ENCODE measurements at regions of chr19 and their contacts with region 1.

Region 1: DNA sequence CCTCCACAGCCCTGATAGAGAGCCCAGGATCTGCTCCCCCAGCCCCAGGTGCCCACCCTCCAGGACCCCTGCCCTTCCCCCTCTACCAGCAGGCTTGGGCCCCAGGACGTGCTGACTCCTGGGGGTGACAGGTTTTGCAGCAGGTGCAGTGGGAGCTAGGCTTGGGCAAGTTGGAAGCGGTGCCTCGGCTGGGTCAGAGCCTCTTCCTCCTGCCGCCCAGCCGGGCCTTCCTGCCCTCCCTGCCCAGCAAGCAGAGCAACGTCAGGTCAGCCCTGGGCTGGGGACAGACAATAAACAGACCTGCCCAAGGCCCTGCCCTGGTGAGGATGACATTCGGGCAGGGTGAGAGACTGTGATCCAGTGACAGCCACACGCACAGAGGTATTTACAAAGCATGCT is 9.2 kb upstream of the NCCRP1 start:
- DNase-seq: no peak
- H3K4me3 ChIP-seq: no peak overlapping the region
- H3K27ac ChIP-seq: no peak overlapping the region
- H3K4me1 ChIP-seq: no peaks in the 10 kb centered on the region
- H3K27me3 ChIP-seq: no peaks in the 10 kb centered on the region
- CTCF ChIP-seq: no peak

Region 2: GRCh38 chr19:39110263-39110967 is 77.1 kb before region 1 on chr19:
- CTCF ChIA-PET with region 1: no interaction called
- dilution Hi-C with region 1: no loop called
- in situ Hi-C with region 1: no loop called
- intact Hi-C with region 1: loop called (anchors 1 kb)
- DNase-seq: no peak
- H3K4me3 ChIP-seq: no peak overlapping the region
- H3K27ac ChIP-seq: no peak overlapping the region
- H3K4me1 ChIP-seq: peaks cover 15% of the 10 kb centered on the region
- H3K27me3 ChIP-seq: no peaks in the 10 kb centered on the region
- CTCF ChIP-seq: peak; percentile 70 to 85

Region 3: DNA sequence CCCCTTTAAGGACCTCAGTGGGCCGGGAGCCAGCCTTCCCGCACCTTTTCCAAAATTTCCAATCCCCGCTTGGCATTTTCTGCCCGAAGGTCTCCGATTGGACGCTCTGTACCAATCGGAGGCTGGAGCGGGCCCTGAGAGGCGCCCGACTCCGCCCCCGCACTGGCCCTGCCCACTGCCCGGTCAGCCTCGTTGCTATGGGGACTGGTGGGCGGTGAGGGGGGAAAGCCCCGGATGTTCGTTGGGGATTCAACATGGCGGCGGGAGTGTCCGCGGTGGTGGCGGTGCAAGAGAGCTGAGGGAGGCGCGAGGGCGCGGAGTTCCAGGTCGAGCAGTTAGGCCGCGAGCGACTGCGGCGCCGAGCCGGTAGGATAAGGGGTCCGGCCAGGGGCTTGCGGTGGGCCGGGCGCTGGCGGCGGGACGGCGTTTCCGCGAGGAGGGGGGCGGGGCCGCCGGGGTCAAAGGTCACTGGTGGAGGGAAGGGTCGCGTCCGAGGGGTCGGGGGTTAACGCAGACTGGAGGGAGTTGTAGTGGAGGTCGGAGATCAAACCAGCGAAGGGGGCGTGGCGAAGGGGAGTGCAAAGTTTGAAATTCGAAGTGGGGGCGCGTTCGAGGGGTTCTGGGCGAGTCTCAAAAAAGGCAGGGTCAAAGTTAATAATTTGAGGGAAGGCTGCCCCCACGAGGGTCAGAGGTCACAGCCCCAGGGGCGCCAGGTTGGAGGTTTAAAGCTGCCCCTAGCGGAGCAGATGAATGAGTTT is 61.8 kb before region 1 on chr19 and contains the start of gene PAK4:
- CTCF ChIA-PET with region 1: no interaction called
- dilution Hi-C with region 1: no loop called
- in situ Hi-C with region 1: loop called (anchors 10 kb)
- intact Hi-C with region 1: loop called (anchors 1 kb)
- DNase-seq: peak; percentile 97
- H3K4me3 ChIP-seq: peak within 1 kb of the TSS; percentile 64 to 86 (median 80)
- H3K27ac ChIP-seq: peak within 1 kb of the TSS; percentile 65
- H3K4me1 ChIP-seq: peaks cover 13% of the 10 kb centered on the region
- H3K27me3 ChIP-seq: no peaks in the 10 kb centered on the region
- CTCF ChIP-seq: no peak
- total RNA-seq, gene PAK4: 8.8 to 45.1 TPM